ENCODE measurements at regions of chr19 and their contacts with region 1.

Region 1: GRCh38 chr19:38773470-38774189 is at the start of gene LGALS7:
- DNase-seq: no peak
- H3K4me3 ChIP-seq: no peak within 1 kb of the TSS
- H3K27ac ChIP-seq: no peak within 1 kb of the TSS
- H3K4me1 ChIP-seq: peaks cover 0 to 4% of the 10 kb centered on the region in 2 donors
- H3K27me3 ChIP-seq: no peaks in the 10 kb centered on the region
- CTCF ChIP-seq: no peak
- total RNA-seq, gene LGALS7: not detected

Region 2: GRCh38 chr19:38793671-38794070 is 20.0 kb after region 1 on chr19:
- intact Hi-C with region 1: loop called (anchors 2 kb)
- DNase-seq: no peak
- H3K4me3 ChIP-seq: no peak overlapping the region
- H3K27ac ChIP-seq: no peak overlapping the region
- H3K4me1 ChIP-seq: peaks cover 0 to 6% of the 10 kb centered on the region in 2 donors
- H3K27me3 ChIP-seq: no peaks in the 10 kb centered on the region
- CTCF ChIP-seq: no peak